Astrocyte of the cerebellum (primary cell): ENCODE measurements at regions of chr12 and their contacts with region 1.

Region 1: GRCh38 chr12:51424662-51425438 is at the start of gene SLC4A8:
- DNase-seq: peak; percentile 45
- H3K4me3 ChIP-seq: peak within 1 kb of the TSS; percentile 61
- CTCF ChIP-seq: peak; percentile 84

Region 2: DNA sequence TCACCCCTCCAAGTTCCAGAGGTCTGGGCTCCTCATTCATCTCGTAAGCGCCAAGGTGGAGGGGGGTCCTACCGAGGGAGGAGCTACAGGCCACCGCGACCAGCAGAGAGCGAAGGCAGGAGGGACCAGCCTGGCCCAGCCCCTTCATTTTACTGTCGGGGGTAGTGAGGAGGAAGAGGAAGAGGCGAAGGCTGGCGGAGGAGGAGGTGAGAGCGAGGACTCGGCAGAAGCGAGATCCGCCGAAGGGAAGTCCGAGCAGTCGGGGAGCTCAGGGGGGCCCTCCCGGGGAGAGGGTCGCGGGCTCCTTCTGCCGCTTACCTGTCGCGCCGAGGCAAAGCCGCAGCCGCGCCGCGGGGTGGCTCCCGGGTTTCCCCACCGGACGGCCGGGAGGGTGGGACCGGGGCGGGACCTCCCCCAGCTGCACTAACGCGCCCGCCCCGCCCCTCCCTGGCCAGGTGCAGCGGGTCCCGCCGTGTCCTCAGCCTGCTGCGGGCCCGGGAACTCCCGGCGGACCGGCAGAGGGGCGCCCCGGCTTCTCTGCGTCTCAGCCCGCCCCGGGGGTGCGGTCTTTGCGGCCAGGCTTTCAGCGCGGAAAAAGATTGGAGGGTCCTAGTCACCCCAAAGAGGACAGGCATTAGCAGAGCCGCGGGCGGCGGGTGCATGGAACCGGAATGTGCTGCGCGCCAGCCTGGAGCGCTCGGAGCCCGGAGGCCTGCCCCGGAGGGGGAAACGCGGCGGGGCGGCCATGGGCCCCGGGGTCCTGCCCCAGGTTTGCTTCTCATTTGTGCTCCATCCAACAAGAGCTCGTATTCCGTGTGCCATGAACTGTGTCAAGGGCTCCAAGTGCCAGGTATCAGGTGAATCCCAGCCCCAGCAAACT is 33.3 kb before region 1 on chr12 and contains the start of gene GALNT6:
- in situ Hi-C with region 1: no loop called
- DNase-seq: no peak
- H3K4me3 ChIP-seq: peak within 1 kb of the TSS; percentile 52
- CTCF ChIP-seq: no peak

Region 3: GRCh38 chr12:51517800-51518199 is 93.0 kb after region 1 on chr12:
- in situ Hi-C with region 1: loop called (anchors 5 kb)
- DNase-seq: no peak
- H3K4me3 ChIP-seq: no peak overlapping the region
- CTCF ChIP-seq: peak; percentile 11